OCI-LY7 (cell line): ENCODE measurements at regions of chr2 and their contacts with region 1.

Region 1: DNA sequence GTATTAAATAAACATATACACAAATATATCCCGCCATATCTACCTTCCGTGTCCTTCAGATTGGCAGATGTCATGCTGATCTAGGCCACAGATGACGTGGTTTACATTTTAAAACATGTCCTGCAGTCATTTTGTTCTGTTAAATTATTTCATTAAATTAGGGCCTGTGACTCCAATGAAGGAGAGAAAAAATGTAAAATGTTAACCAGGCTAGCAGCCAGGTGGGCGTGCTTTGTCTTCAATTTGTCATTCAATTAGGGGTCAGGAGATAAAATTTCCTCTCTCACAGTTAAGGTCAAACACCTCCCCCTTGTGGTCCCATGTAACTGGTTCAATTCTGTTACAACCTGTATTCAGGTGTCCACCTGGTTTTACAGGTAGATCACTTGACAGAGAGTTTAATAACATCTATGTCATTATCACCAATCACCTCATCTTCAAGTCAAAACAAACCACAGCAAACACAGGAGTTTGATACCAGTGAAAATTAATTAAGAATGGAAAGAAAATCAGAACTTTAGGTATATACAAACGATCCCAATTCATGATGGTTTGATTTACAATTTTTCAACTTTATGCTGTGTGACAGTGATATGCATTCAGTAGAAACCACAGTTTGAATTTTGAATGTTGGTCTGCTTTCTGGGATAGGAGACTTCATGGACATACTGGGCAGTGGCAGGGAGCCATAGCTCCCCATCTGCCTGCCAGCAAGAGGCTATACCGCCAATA is 339.4 kb downstream of the CMPK2 start:
- DNase-seq: peak; percentile 78
- H3K4me3 ChIP-seq: no peak overlapping the region
- H3K27ac ChIP-seq: no peak overlapping the region
- H3K4me1 ChIP-seq: peaks cover 14% of the 10 kb centered on the region
- CTCF ChIP-seq: peak; percentile 96

Region 2: DNA sequence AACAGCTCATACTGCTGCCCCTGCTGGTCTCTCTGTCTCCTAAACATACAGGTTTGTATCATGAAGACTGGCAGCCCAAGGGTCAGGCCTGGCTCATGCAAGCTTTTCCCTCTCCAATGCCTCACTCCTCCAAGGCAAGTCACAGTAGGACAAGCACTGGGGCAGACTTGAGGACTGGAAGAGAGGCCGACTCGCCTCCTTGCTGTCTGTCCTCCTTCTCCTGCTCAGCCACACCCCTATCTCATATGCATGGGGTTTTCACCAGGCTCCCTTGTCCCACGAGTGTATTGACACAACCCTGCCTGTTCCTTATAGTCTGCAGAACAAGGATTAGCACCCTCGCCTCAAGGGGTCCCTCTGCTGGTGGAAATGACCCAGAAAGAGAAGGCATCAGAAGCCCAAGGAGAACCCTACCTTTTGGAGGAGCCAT is 610.4 kb before region 1 on chr2:
- CTCF ChIA-PET with region 1: no interaction called
- POLR2A ChIA-PET with region 1: no interaction called
- intact Hi-C with region 1: loop called (anchors 5 kb)
- DNase-seq: peak; percentile 41
- H3K4me3 ChIP-seq: no peak overlapping the region
- H3K27ac ChIP-seq: no peak overlapping the region
- H3K4me1 ChIP-seq: no peaks in the 10 kb centered on the region
- CTCF ChIP-seq: peak; percentile 78

Region 3: GRCh38 chr2:6011921-6012320 is 514.3 kb before region 1 on chr2:
- CTCF ChIA-PET with region 1: no interaction called
- POLR2A ChIA-PET with region 1: no interaction called
- intact Hi-C with region 1: loop called (anchors 10 kb)
- DNase-seq: no peak
- H3K4me3 ChIP-seq: no peak overlapping the region
- H3K27ac ChIP-seq: no peak overlapping the region
- H3K4me1 ChIP-seq: no peaks in the 10 kb centered on the region
- CTCF ChIP-seq: no peak

Region 4: DNA sequence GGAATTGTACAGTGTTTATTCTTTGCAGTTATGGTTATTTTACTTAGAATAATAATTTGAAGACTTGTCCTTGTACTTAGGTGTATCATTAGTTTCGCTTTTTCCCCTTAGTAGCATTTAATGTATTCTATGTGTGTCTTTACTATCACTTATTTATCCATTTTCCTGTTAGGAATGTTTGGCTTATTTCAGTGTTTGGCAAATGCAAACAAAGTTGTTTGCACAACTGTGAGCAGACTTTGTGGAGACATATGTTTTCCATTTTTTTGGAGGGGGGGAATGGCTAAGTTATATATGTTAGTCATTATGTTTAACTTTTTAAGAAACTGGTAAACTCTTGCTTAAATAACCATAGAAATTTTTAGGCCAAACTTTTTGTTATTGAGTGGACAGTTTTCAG is 386.3 kb before region 1 on chr2:
- CTCF ChIA-PET with region 1: no interaction called
- POLR2A ChIA-PET with region 1: no interaction called
- intact Hi-C with region 1: loop called (anchors 5 kb)
- DNase-seq: no peak
- H3K4me3 ChIP-seq: no peak overlapping the region
- H3K27ac ChIP-seq: no peak overlapping the region
- H3K4me1 ChIP-seq: peaks cover 7% of the 10 kb centered on the region
- CTCF ChIP-seq: no peak

Region 5: GRCh38 chr2:6773007-6773693 is 246.9 kb after region 1 on chr2:
- CTCF ChIA-PET with region 1: no interaction called
- POLR2A ChIA-PET with region 1: no interaction called
- intact Hi-C with region 1: loop called (anchors 5 kb)
- DNase-seq: peak; percentile 78
- H3K4me3 ChIP-seq: peak overlapping the region; percentile 54
- H3K27ac ChIP-seq: peak overlapping the region; percentile 24
- H3K4me1 ChIP-seq: peaks cover 46% of the 10 kb centered on the region
- CTCF ChIP-seq: peak; percentile 98